ENCODE measurements at regions of chr1 and their contacts with region 1.

Region 1: GRCh38 chr1:216843409-216843808 is 120.2 kb upstream of the ESRRG start:
- DNase-seq: no peak
- H3K4me3 ChIP-seq: no peak overlapping the region
- H3K27ac ChIP-seq: no peak overlapping the region
- H3K4me1 ChIP-seq: no peaks in the 10 kb centered on the region
- H3K27me3 ChIP-seq: no peaks in the 10 kb centered on the region
- CTCF ChIP-seq: no peak
- EP300 ChIP-seq: no peak
- POLR2A ChIP-seq: no peak

Region 2: GRCh38 chr1:217574283-217574955 is 731.0 kb after region 1 on chr1:
- in situ Hi-C with region 1: no loop called
- intact Hi-C with region 1: loop called (anchors 5 kb)
- DNase-seq: no peak
- H3K4me3 ChIP-seq: no peak overlapping the region
- H3K27ac ChIP-seq: no peak overlapping the region
- H3K4me1 ChIP-seq: peaks cover 0 to 13% (median 0%) of the 10 kb centered on the region in 4 donors
- H3K27me3 ChIP-seq: no peaks in the 10 kb centered on the region
- CTCF ChIP-seq: no peak
- EP300 ChIP-seq: no peak
- POLR2A ChIP-seq: no peak

Measured in transverse colon (tissue), 4 donors.